ENCODE measurements at regions of chr15 and their contacts with region 1.

Region 1: GRCh38 chr15:40893733-40894688 is at the start of gene VPS18:
- DNase-seq: peak; percentile 97 to 99 (median 99)
- ATAC-seq: peak; percentile 97
- H3K4me3 ChIP-seq: peak within 1 kb of the TSS; percentile 85 to 98
- H3K4me3 Mint-ChIP-seq: peak within 1 kb of the TSS; percentile 98
- H3K27ac ChIP-seq: peak within 1 kb of the TSS; percentile 76 to 91
- H3K27ac Mint-ChIP-seq: peak within 1 kb of the TSS; percentile 96
- H3K4me1 ChIP-seq: peaks cover 19% of the 10 kb centered on the region
- H3K4me1 Mint-ChIP-seq: peaks cover 40% of the 10 kb centered on the region
- H3K27me3 ChIP-seq: no peaks in the 10 kb centered on the region
- H3K27me3 Mint-ChIP-seq: no peaks in the 10 kb centered on the region
- CTCF ChIP-seq: peak; percentile 88
- total RNA-seq, gene VPS18: 21.7 to 23.6 TPM

Region 2: DNA sequence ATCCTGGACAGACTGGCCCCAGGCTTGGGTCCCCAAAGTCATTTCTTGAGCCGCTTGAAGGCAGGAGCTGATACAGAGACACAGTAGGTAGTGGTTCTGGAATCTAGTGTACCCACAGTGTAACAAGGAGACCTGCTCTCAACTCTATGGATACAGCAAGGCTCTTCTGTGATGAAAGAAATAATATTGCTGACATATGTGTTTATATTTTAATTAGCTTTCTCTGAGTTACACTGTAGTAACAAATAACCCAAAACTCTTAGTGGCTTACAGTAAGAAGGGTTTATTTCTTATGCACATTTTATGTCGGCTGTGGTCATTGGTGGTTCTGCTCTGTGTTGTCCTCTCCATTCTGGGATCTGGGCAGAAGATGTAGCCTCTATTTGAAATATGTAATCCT is 377.7 kb before region 1 on chr15:
- CTCF ChIA-PET with region 1: no interaction called
- POLR2A ChIA-PET with region 1: no interaction called
- intact Hi-C with region 1: loop called in 1 of 2 experiments (anchors 5 kb)
- DNase-seq: no peak
- ATAC-seq: no peak
- H3K4me3 ChIP-seq: no peak overlapping the region
- H3K4me3 Mint-ChIP-seq: no peak overlapping the region
- H3K27ac ChIP-seq: no peak overlapping the region
- H3K27ac Mint-ChIP-seq: no peak overlapping the region
- H3K4me1 ChIP-seq: peaks cover 8% of the 10 kb centered on the region
- H3K4me1 Mint-ChIP-seq: peaks cover 14% of the 10 kb centered on the region
- H3K27me3 ChIP-seq: peaks cover 6 to 7% of the 10 kb centered on the region in 2 experiments
- H3K27me3 Mint-ChIP-seq: peaks cover 20% of the 10 kb centered on the region
- CTCF ChIP-seq: no peak

Region 3: DNA sequence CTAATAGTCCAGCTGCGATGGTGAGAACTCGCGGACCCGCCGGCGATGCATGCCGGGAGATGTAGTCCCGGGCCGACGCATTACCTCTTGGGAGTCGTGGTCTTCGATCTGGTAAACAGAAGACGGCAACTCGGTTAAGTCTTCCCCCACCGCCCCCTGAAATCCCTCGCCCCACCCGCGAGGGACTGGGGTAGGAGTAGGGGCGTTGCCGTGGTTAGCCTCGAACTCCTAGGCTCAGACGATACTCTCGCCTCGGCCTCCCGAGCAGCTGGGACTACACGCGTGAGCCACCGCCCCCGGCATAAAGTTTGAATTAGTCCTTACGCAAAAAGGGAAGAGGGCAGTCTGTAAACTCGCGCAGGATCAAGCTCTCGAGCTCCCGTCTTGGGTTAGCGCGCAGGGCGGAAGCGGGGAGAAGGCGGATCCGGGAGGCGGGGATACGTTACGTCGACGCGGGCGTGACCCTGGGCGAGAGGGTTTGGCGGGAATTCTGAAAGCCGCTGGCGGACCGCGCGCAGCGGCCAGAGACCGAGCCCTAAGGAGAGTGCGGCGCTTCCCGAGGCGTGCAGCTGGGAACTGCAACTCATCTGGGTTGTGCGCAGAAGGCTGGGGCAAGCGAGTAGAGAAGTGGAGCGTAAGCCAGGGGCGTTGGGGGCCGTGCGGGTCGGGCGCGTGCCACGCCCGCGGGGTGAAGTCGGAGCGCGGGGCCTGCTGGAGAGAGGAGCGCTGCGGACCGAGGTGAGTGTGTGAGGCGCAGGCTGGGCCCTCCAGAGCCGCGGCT is 199.1 kb before region 1 on chr15 and contains the start of gene RAD51:
- CTCF ChIA-PET with region 1: interaction called, 5 read pairs
- POLR2A ChIA-PET with region 1: interaction called, 5 read pairs
- intact Hi-C with region 1: loop called (anchors 1 to 2 kb)
- DNase-seq: peak; percentile 82 to 96 (median 94)
- ATAC-seq: peak; percentile 94
- H3K4me3 ChIP-seq: peak within 1 kb of the TSS; percentile 84 to 94
- H3K4me3 Mint-ChIP-seq: peak within 1 kb of the TSS; percentile 99
- H3K27ac ChIP-seq: peak within 1 kb of the TSS; percentile 83 to 98
- H3K27ac Mint-ChIP-seq: peak within 1 kb of the TSS; percentile 99
- H3K4me1 ChIP-seq: peaks cover 12% of the 10 kb centered on the region
- H3K4me1 Mint-ChIP-seq: peaks cover 27% of the 10 kb centered on the region
- H3K27me3 ChIP-seq: no peaks in the 10 kb centered on the region
- H3K27me3 Mint-ChIP-seq: no peaks in the 10 kb centered on the region
- CTCF ChIP-seq: no peak
- total RNA-seq, gene RAD51: 1.3 to 1.5 TPM

Region 4: DNA sequence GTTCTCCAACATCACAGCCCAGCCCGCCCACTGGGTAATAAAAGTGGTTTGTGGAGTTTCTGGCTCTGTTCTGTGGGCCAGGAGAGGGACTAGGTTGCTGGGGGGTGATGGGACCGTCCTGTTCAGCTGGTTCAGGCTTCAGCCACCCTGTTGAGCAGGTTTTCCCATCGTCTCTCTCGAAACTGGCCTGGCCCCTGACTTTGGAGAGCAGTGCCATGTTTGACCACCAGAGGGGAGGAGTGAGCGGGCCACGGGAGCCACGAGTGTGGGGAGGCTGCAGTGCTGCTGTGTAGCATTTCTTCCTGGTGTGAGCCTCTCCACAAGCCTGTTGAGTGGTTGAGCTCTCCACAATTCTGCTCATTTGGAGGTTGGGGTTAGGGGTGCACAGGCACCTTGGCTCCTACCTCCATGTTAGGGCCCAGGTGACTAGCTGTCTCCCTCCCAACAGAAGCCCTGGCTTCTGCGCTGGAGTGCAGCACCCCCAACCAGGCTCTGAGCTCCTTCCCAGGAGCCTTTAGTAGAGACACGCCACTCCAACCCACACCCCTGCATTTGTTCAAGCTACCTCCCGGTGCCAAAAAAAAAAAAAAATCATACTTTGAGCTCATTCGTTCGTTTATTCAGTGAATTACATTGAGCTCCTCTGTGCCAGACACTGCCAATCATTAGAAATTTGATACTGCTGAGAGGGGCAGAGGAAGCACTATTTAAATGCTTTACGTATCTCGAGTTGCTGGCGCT is 36.2 kb before region 1 on chr15:
- CTCF ChIA-PET with region 1: interaction called, 189 read pairs
- POLR2A ChIA-PET with region 1: interaction called, 38 read pairs
- intact Hi-C with region 1: loop called (anchors 1 kb)
- DNase-seq: peak; percentile 70 to 87 (median 79)
- ATAC-seq: peak; percentile 97
- H3K4me3 ChIP-seq: no peak overlapping the region
- H3K4me3 Mint-ChIP-seq: no peak overlapping the region
- H3K27ac ChIP-seq: no peak overlapping the region
- H3K27ac Mint-ChIP-seq: no peak overlapping the region
- H3K4me1 ChIP-seq: peaks cover 5% of the 10 kb centered on the region
- H3K4me1 Mint-ChIP-seq: no peaks in the 10 kb centered on the region
- H3K27me3 ChIP-seq: no peaks in the 10 kb centered on the region
- H3K27me3 Mint-ChIP-seq: no peaks in the 10 kb centered on the region
- CTCF ChIP-seq: peak; percentile 79

Region 5: GRCh38 chr15:40941528-40942336 is 47.7 kb after region 1 on chr15:
- CTCF ChIA-PET with region 1: interaction called, 14 read pairs
- POLR2A ChIA-PET with region 1: no interaction called
- intact Hi-C with region 1: no loop called
- DNase-seq: peak in 8 of 9 experiments; percentile 56 to 84 (median 66)
- ATAC-seq: peak; percentile 72
- H3K4me3 ChIP-seq: peak overlapping the region; percentile 69 to 78
- H3K4me3 Mint-ChIP-seq: peak overlapping the region; percentile 86
- H3K27ac ChIP-seq: peak overlapping the region; percentile 30 to 64
- H3K27ac Mint-ChIP-seq: peak overlapping the region; percentile 30
- H3K4me1 ChIP-seq: peaks cover 29% of the 10 kb centered on the region
- H3K4me1 Mint-ChIP-seq: peaks cover 37% of the 10 kb centered on the region
- H3K27me3 ChIP-seq: no peaks in the 10 kb centered on the region
- H3K27me3 Mint-ChIP-seq: no peaks in the 10 kb centered on the region
- CTCF ChIP-seq: peak; percentile 40

Region 6: GRCh38 chr15:41230650-41231533 is 336.9 kb after region 1 on chr15 and contains the starts of genes CHP1 and EXD1:
- CTCF ChIA-PET with region 1: no interaction called
- POLR2A ChIA-PET with region 1: interaction called, 5 read pairs
- intact Hi-C with region 1: loop called in 1 of 2 experiments (anchors 2 kb)
- DNase-seq: peak; percentile 89 to 97 (median 94)
- ATAC-seq: peak; percentile 95
- H3K4me3 ChIP-seq: peak within 1 kb of the TSS; percentile 83 to 89
- H3K4me3 Mint-ChIP-seq: peak within 1 kb of the TSS; percentile 89
- H3K27ac ChIP-seq: peak within 1 kb of the TSS; percentile 74 to 85
- H3K27ac Mint-ChIP-seq: peak within 1 kb of the TSS; percentile 90
- H3K4me1 ChIP-seq: peaks cover 27% of the 10 kb centered on the region
- H3K4me1 Mint-ChIP-seq: peaks cover 37% of the 10 kb centered on the region
- H3K27me3 ChIP-seq: no peaks in the 10 kb centered on the region
- H3K27me3 Mint-ChIP-seq: no peaks in the 10 kb centered on the region
- CTCF ChIP-seq: peak; percentile 99
- total RNA-seq, gene CHP1: 25.6 to 28.9 TPM
- total RNA-seq, gene EXD1: not detected